ENCODE measurements at regions of chr11 and their contacts with region 1.

Region 1: DNA sequence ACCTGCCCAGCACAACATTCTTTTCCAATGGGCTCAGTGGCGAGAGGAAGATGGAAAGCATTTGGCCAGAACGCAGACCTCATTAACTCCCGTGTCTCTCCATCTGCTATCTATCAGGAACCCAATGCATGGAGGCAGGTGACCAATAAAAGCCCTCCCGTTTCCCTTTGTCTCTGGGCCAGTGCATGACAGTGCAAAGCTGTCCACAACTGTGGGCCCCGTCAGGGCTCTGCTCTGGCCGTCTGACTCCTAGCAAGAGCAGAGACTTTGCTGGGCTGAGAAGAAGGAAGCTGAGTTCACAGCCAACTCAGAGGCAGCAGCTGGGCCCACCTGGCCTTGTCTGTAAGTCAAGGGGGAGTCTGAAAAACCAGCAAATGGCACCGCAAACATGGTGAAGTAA is 177.8 kb downstream of the TENM4 start:
- DNase-seq: no peak
- H3K4me3 Mint-ChIP-seq: no peak overlapping the region
- H3K27ac Mint-ChIP-seq: no peak overlapping the region
- H3K4me1 Mint-ChIP-seq: no peaks in the 10 kb centered on the region
- H3K27me3 Mint-ChIP-seq: no peaks in the 10 kb centered on the region

Region 2: GRCh38 chr11:77879218-77879617 is 1383.8 kb before region 1 on chr11:
- CTCF ChIA-PET with region 1: no interaction called
- POLR2A ChIA-PET with region 1: no interaction called
- intact Hi-C with region 1: loop called (anchors 10 kb)
- DNase-seq: no peak
- H3K4me3 Mint-ChIP-seq: no peak overlapping the region
- H3K27ac Mint-ChIP-seq: no peak overlapping the region
- H3K4me1 Mint-ChIP-seq: no peaks in the 10 kb centered on the region
- H3K27me3 Mint-ChIP-seq: no peaks in the 10 kb centered on the region